A549 (cell line): ENCODE measurements at regions of chr7 and their contacts with region 1.

Region 1: GRCh38 chr7:5665094-5666025 is 116.1 kb downstream of the RNF216 start:
- DNase-seq: peak; percentile 62 to 79
- ATAC-seq: peak; percentile 93 to 95
- H3K4me3 ChIP-seq: no peak overlapping the region
- H3K27ac ChIP-seq: no peak overlapping the region
- H3K4me1 ChIP-seq: peaks cover 4% of the 10 kb centered on the region; the same call in 1 of the 3 replicates
- CTCF ChIP-seq: peak; percentile 92
- EP300 ChIP-seq: no peak
- POLR2A ChIP-seq: no peak
- RAD21 ChIP-seq: peak; percentile 92 to 93

Region 2: DNA sequence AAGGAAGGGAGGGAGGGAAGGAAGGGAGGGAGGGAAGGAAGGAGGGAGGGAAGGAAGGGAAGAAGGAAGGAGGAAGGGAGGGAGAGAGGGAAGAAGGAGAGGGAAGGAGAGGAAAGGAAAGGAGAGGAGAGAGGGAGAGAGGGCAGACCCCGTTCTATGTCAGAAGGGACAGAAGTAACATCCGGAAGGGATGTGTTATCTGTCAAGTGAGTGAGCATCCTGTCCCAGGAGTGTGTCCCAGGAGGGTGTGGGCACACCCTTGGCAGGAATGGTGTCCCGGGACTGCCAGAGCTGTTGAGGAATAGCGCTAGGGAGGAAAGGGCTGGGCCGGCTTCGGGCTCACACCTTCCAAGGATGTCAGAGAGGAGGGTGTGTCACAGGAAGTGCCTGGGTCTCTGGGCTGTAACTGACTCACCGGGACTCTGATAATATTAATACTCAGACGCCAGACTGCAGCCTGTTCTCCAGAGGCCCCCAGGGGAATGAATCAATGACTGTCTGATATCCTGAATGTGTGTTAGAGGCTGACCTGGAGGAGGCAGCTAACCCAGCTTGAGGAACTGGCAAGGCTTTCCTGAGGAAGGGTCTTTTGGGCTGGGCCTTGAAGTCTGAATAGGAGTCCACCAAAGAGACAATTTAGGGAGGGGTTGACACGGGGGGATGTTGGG is 116.1 kb before region 1 on chr7:
- CTCF ChIA-PET with region 1: interaction called, 10 read pairs
- POLR2A ChIA-PET with region 1: no interaction called
- DNase-seq: peak; percentile 89 to 91
- ATAC-seq: peak; percentile 87 to 93
- H3K4me3 ChIP-seq: no peak overlapping the region; the same call in 2 of the 3 replicates
- H3K27ac ChIP-seq: peak overlapping the region; percentile 81 to 86
- H3K4me1 ChIP-seq: peaks cover 25% of the 10 kb centered on the region
- CTCF ChIP-seq: no peak
- EP300 ChIP-seq: no peak
- POLR2A ChIP-seq: no peak
- RAD21 ChIP-seq: no peak

Region 3: GRCh38 chr7:5567790-5568189 is 97.6 kb before region 1 on chr7:
- CTCF ChIA-PET with region 1: no interaction called
- POLR2A ChIA-PET with region 1: no interaction called
- DNase-seq: peak in 1 of 2 experiments; percentile 51
- ATAC-seq: no peak
- H3K4me3 ChIP-seq: no peak overlapping the region
- H3K27ac ChIP-seq: peak overlapping the region in 1 of 2 experiments; percentile 45; a peak in 1 of 6 replicates
- H3K4me1 ChIP-seq: peaks cover 18% of the 10 kb centered on the region
- CTCF ChIP-seq: no peak
- EP300 ChIP-seq: no peak
- POLR2A ChIP-seq: no peak
- RAD21 ChIP-seq: no peak

Region 4: GRCh38 chr7:5607951-5608656 is 57.3 kb before region 1 on chr7:
- CTCF ChIA-PET with region 1: interaction called, 12 read pairs
- POLR2A ChIA-PET with region 1: no interaction called
- DNase-seq: no peak
- ATAC-seq: peak; percentile 20 to 26; a peak in 4 of 6 replicates
- H3K4me3 ChIP-seq: no peak overlapping the region
- H3K27ac ChIP-seq: peak overlapping the region in 1 of 2 experiments; percentile 26; a peak in 1 of 6 replicates
- H3K4me1 ChIP-seq: no peaks in the 10 kb centered on the region
- CTCF ChIP-seq: no peak
- EP300 ChIP-seq: no peak
- POLR2A ChIP-seq: no peak
- RAD21 ChIP-seq: no peak

Region 5: DNA sequence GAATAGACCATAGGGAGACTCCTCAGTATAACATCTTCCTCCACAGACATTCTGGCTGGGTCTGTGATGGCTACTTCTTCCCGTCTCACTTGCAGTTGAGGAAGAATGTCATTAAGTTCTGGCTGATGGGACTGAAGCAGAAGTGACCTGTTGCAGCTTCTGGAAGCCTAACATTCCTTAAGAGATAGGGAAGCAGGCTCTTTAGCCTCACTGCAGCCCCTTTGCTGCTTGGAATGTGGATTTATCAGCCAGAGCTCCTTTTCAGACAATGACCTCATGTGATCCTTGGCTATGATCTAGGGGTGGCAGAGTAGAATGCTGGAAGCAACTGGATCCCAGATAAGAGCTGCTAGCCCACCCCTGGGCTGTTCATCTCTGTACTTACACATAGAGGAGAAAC is 26.4 kb before region 1 on chr7:
- CTCF ChIA-PET with region 1: interaction called, 23 read pairs
- POLR2A ChIA-PET with region 1: no interaction called
- DNase-seq: no peak
- ATAC-seq: no peak
- H3K4me3 ChIP-seq: no peak overlapping the region
- H3K27ac ChIP-seq: no peak overlapping the region
- H3K4me1 ChIP-seq: peaks cover 16% of the 10 kb centered on the region
- CTCF ChIP-seq: no peak
- EP300 ChIP-seq: no peak
- POLR2A ChIP-seq: no peak
- RAD21 ChIP-seq: no peak

Region 6: DNA sequence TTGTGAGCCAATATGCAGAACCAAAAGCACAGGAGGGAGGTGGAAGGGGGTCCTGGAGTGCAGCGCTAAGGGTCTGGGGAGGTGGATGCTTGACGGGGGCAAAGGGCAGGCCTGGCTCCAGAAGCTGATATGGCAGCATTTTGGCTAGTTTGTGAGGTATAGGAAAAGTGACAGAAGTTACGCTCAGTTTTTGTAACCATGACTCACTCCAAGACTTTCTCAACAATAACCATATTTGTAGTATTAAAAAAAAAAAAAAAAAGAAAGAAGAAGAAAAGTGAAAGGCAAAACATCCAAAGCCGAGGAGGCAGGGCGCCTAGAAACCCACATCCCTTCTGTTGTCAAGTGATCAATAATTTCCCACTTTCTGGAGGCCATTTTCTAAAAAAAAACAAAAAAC is 23.8 kb after region 1 on chr7:
- CTCF ChIA-PET with region 1: interaction called, 27 read pairs
- POLR2A ChIA-PET with region 1: interaction called, 3 read pairs
- DNase-seq: no peak
- ATAC-seq: no peak
- H3K4me3 ChIP-seq: no peak overlapping the region
- H3K27ac ChIP-seq: peak overlapping the region; percentile 41 to 86; a peak in 4 of 6 replicates
- H3K4me1 ChIP-seq: peaks cover 62% of the 10 kb centered on the region
- CTCF ChIP-seq: no peak
- EP300 ChIP-seq: no peak
- POLR2A ChIP-seq: no peak
- RAD21 ChIP-seq: no peak

Region 7: GRCh38 chr7:5713124-5713912 is 48.0 kb after region 1 on chr7:
- CTCF ChIA-PET with region 1: interaction called, 24 read pairs
- POLR2A ChIA-PET with region 1: no interaction called
- DNase-seq: no peak
- ATAC-seq: no peak
- H3K4me3 ChIP-seq: no peak overlapping the region
- H3K27ac ChIP-seq: no peak overlapping the region
- H3K4me1 ChIP-seq: no peaks in the 10 kb centered on the region
- CTCF ChIP-seq: no peak
- EP300 ChIP-seq: no peak
- POLR2A ChIP-seq: no peak
- RAD21 ChIP-seq: no peak